ENCODE measurements at regions of chr11 and their contacts with region 1.

Region 1: DNA sequence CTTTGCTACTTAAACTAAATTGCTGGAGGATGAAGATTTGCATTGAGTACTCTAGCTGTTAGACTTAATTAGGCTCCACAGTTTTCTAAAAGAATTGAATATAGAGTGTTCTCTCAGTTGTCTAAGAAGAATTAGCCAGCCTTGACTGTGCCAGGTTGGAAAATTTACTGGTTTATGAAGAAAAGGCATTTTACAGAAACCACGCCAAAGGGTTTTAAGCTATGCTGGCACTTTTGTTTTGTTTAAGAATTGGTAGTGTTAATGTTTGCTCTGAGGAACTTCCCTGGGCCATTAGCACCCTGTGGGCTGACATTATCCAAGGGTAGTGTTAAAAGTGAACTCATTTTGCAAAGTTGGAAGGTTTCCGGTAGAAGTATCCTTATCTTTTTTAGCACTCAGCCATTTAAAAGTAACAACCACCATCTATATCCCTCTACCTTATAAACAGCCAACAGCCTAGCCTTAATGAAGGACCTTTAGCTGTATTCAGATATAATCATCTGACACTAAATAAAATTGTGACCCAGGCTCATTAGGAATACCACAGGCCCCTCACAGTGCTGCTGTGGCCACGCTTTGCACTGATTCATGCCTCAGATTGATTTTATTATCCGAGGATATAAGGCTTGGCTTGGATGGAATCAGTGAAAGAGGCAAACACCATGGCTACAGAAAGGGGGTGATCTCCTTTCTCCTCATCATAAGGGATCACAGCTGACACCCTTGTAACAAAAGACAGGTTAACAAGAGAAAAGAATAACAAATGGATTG is 158.9 kb downstream of the NCAM1 start:
- DNase-seq: no peak
- H3K4me3 ChIP-seq: no peak overlapping the region
- H3K27ac ChIP-seq: no peak overlapping the region
- H3K4me1 ChIP-seq: no peaks in the 10 kb centered on the region
- H3K27me3 ChIP-seq: no peaks in the 10 kb centered on the region
- CTCF ChIP-seq: no peak
- POLR2A ChIP-seq: no peak

Region 2: GRCh38 chr11:113001709-113002108 is 118.4 kb before region 1 on chr11:
- intact Hi-C with region 1: no loop called
- DNase-seq: no peak
- H3K4me3 ChIP-seq: no peak overlapping the region
- H3K27ac ChIP-seq: no peak overlapping the region
- H3K4me1 ChIP-seq: no peaks in the 10 kb centered on the region
- H3K27me3 ChIP-seq: no peaks in the 10 kb centered on the region
- CTCF ChIP-seq: no peak
- POLR2A ChIP-seq: no peak

Region 3: DNA sequence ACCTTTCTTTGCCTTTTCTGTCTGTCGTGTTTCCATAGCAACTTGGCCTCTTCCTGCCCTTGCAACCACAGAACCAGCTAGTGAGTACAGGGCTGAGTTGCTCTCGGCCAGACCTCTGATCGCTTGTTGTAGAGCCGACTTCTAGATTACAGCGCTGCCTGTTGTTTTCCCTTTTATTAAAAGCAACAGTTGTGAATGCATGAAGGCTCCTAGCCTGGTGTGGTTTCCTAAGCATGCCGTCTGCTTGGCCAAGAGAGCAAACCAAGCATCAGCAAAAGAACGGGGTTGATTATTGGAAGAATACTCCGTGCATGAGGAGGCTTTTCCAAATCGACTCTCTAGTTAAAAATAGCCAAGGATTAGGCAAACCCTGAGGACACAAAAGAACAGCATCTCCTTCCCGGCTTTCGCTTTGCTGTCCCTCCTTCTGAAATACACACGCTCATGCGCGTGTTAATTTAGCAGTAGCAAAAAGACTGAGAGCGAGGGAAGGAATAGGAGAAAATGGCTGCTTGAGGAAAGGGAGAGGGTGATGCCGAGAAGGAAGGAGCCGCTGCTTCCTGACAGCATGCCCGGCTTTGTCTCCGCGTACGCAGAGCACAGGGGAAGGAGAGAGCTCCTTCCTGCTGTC is 122.7 kb after region 1 on chr11:
- intact Hi-C with region 1: loop called (anchors 10 kb)
- DNase-seq: no peak
- H3K4me3 ChIP-seq: peak overlapping the region; percentile 12 to 15
- H3K27ac ChIP-seq: peak overlapping the region in 1 of 2 donors; percentile 37
- H3K4me1 ChIP-seq: no peaks in the 10 kb centered on the region
- H3K27me3 ChIP-seq: no peaks in the 10 kb centered on the region
- CTCF ChIP-seq: no peak
- POLR2A ChIP-seq: no peak

Measured in prostate gland (tissue), 2 donors.